Caco-2 (cell line): ENCODE measurements at regions of chr7 and their contacts with region 1.

Region 1: DNA sequence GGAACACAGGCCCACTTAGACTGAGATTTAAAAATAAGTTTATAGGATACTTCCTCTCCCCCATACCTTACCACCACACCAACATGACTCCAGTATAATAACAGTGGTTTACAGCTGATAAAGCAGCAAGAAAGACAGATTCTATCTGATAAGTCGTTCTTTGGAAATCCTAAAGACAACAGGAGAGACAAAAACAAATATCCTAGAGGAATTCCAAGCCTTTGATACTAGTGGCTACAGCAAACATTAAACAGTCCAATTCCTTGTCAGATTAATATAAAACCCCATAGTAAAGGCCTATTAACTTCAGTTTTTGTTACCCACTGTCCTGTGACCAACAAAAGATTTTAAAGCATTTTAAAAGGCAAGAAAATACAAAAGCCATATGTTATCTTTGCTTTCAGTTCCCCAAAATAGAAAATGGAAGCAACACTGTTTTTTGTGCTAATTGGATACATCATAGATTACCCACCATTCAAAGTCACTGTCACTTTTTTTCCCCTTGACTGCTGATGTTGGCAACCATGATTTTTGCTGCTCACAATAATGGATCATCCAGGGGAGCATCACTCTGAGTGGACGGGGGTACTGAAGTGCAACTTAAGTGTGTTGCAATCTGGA is 52.5 kb upstream of the TMEM140 start:
- DNase-seq: peak in 1 of 2 experiments; percentile 49
- H3K4me3 ChIP-seq: no peak overlapping the region
- H3K4me3 Mint-ChIP-seq: peak overlapping the region; percentile 10
- H3K27ac Mint-ChIP-seq: no peak overlapping the region
- H3K4me1 ChIP-seq: peaks cover 51% of the 10 kb centered on the region
- H3K4me1 Mint-ChIP-seq: peaks cover 32% of the 10 kb centered on the region
- H3K27me3 ChIP-seq: no peaks in the 10 kb centered on the region
- H3K27me3 Mint-ChIP-seq: no peaks in the 10 kb centered on the region
- CTCF ChIP-seq: no peak

Region 2: GRCh38 chr7:134298902-134299683 is 796.2 kb before region 1 on chr7:
- CTCF ChIA-PET with region 1: no interaction called
- POLR2A ChIA-PET with region 1: no interaction called
- intact Hi-C with region 1: no loop called
- DNase-seq: no peak
- H3K4me3 ChIP-seq: no peak overlapping the region
- H3K4me3 Mint-ChIP-seq: no peak overlapping the region
- H3K27ac Mint-ChIP-seq: no peak overlapping the region
- H3K4me1 ChIP-seq: no peaks in the 10 kb centered on the region
- H3K4me1 Mint-ChIP-seq: no peaks in the 10 kb centered on the region
- H3K27me3 ChIP-seq: no peaks in the 10 kb centered on the region
- H3K27me3 Mint-ChIP-seq: no peaks in the 10 kb centered on the region
- CTCF ChIP-seq: no peak

Region 3: GRCh38 chr7:135147899-135148721 is 52.8 kb after region 1 on chr7 and contains the start of gene TMEM140:
- CTCF ChIA-PET with region 1: no interaction called
- POLR2A ChIA-PET with region 1: interaction called, 4 read pairs
- intact Hi-C with region 1: loop called (anchors 1 kb)
- DNase-seq: peak; percentile 63 to 74
- H3K4me3 ChIP-seq: peak within 1 kb of the TSS; percentile 33
- H3K4me3 Mint-ChIP-seq: peak within 1 kb of the TSS; percentile 79
- H3K27ac Mint-ChIP-seq: peak within 1 kb of the TSS; percentile 86
- H3K4me1 ChIP-seq: peaks cover 14% of the 10 kb centered on the region
- H3K4me1 Mint-ChIP-seq: peaks cover 21% of the 10 kb centered on the region
- H3K27me3 ChIP-seq: no peaks in the 10 kb centered on the region
- H3K27me3 Mint-ChIP-seq: no peaks in the 10 kb centered on the region
- CTCF ChIP-seq: no peak
- total RNA-seq, gene TMEM140: 3.8 and 6.1 TPM in 2 replicates

Region 4: GRCh38 chr7:135825406-135825805 is 730.1 kb after region 1 on chr7:
- CTCF ChIA-PET with region 1: no interaction called
- POLR2A ChIA-PET with region 1: no interaction called
- intact Hi-C with region 1: no loop called
- DNase-seq: no peak
- H3K4me3 ChIP-seq: no peak overlapping the region
- H3K4me3 Mint-ChIP-seq: no peak overlapping the region
- H3K27ac Mint-ChIP-seq: no peak overlapping the region
- H3K4me1 ChIP-seq: peaks cover 12% of the 10 kb centered on the region
- H3K4me1 Mint-ChIP-seq: peaks cover 19% of the 10 kb centered on the region
- H3K27me3 ChIP-seq: no peaks in the 10 kb centered on the region
- H3K27me3 Mint-ChIP-seq: no peaks in the 10 kb centered on the region
- CTCF ChIP-seq: no peak